Panc1 (cell line): ENCODE measurements at regions of chr1 and their contacts with region 1.

Region 1: GRCh38 chr1:214551436-214552173 is at the start of gene PTPN14:
- DNase-seq: no peak
- ATAC-seq: peak; percentile 87
- H3K4me3 ChIP-seq: peak within 1 kb of the TSS; percentile 91 to 92
- H3K27ac ChIP-seq: peak within 1 kb of the TSS; percentile 99
- H3K4me1 ChIP-seq: peaks cover 41% of the 10 kb centered on the region
- H3K27me3 ChIP-seq: no peaks in the 10 kb centered on the region
- CTCF ChIP-seq: peak; percentile 67
- total RNA-seq, gene PTPN14: 209 TPM

Region 2: DNA sequence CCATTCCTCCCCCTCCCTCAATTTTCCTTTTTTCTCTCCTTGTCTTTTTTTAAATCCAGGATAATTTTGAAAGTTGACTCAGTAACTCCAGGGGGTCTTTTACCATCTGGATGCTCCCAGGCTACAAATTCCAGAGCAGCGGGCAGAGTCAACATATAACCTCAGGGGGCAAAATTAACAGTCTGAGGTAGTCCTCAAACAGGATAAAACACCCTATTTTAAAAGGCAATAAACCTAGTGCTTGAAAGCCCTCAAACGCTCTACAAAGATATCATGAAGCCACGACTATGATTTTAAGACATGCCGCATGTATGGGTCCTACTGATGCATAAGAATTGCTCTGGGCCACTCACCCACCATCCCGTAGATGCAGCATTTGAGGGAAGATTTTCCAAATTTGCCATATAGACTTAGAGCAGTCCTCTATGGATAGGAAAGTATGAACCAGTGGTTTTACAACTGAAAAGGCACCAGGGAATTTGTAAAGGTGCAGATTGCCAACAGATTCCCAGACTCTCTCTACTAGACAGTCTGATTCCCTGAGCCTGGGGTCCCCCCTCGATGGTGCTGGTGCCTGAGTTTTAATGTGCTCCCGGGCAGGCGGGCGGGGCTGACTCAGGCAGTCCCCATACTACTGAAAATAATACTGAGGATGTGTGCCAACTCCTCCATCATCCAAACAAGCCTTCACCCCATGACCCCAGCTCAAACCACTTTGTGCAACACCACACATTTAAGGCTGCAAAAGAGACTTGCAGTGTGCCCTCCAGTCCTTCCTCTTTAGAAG is 37.4 kb before region 1 on chr1:
- CTCF ChIA-PET with region 1: no interaction called
- POLR2A ChIA-PET with region 1: interaction called, 3 read pairs
- in situ Hi-C with region 1: no loop called
- intact Hi-C with region 1: loop called (anchors 5 kb)
- DNase-seq: no peak
- ATAC-seq: peak; percentile 73
- H3K4me3 ChIP-seq: peak overlapping the region; percentile 22 to 35
- H3K27ac ChIP-seq: peak overlapping the region; percentile 93
- H3K4me1 ChIP-seq: peaks cover 71% of the 10 kb centered on the region
- H3K27me3 ChIP-seq: no peaks in the 10 kb centered on the region
- CTCF ChIP-seq: no peak

Region 3: GRCh38 chr1:214584805-214585766 is 33.5 kb after region 1 on chr1:
- CTCF ChIA-PET with region 1: interaction called, 11 read pairs
- POLR2A ChIA-PET with region 1: interaction called, 10 read pairs
- in situ Hi-C with region 1: no loop called
- intact Hi-C with region 1: loop called (anchors 2 kb)
- DNase-seq: peak; percentile 62
- ATAC-seq: peak; percentile 73
- H3K4me3 ChIP-seq: no peak overlapping the region
- H3K27ac ChIP-seq: peak overlapping the region; percentile 86
- H3K4me1 ChIP-seq: peaks cover 43% of the 10 kb centered on the region
- H3K27me3 ChIP-seq: no peaks in the 10 kb centered on the region
- CTCF ChIP-seq: peak; percentile 93; the same call in 1 of the 2 replicates

Region 4: DNA sequence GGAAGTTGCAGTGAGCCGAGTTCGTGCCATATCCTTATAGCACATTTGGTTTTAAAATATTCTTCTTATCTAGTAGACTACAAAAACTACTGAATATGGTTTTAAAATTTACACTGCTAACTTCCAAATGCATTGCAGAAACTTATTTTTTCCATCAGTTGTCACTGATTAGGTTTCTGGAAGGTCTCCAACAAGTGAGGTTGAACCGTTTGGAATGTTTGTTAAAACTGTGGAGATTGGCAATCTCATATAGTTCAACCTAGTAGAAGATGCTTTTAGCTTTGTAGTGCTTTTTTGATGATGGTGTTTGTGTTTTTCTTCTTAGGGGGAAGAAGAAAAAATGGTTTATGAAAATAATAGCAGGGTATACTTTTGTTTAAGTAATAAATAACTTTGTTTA is 64.3 kb after region 1 on chr1:
- CTCF ChIA-PET with region 1: no interaction called
- POLR2A ChIA-PET with region 1: interaction called, 13 read pairs
- in situ Hi-C with region 1: no loop called
- intact Hi-C with region 1: no loop called
- DNase-seq: no peak
- ATAC-seq: no peak
- H3K4me3 ChIP-seq: no peak overlapping the region
- H3K27ac ChIP-seq: 0 out of 2 replicates have a peak overlapping the region, but pooled peaks have one; percentile 15
- H3K4me1 ChIP-seq: peaks cover 19% of the 10 kb centered on the region
- H3K27me3 ChIP-seq: no peaks in the 10 kb centered on the region
- CTCF ChIP-seq: no peak